ENCODE measurements at regions of chr12 and their contacts with region 1.

Region 1: DNA sequence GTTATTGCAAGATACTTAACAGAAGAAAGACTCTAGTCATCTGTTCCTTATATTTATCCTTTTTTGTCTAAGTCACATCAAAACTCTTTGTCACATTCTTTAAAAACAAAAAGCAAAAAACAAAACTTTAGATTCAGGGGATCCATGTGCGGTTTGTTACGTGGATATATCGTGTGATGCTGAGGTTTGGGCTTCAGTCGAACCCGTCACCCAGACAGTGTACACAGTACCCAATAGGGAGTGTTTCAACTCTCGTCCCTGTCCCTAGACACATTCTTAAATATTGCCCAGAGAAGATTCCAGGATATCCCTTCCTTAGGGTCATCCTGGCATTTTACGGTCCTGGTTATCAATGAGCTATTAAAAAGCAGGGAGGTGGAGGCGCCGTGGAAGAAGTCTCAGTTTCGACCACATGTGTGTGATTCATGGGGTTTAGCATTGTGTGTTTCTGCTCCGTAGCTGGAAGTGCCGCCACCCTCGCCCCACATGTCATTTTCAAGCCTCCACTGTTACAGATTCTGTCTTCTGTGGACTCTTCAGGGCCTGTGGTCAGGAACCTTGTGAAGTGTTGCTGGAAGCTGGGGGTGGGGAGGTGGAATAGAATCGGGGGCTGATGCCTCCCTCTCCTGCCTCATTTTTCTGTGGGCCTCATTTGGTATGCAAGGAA is 19.9 kb downstream of the CCND2 start:
- DNase-seq: peak; percentile 77
- H3K4me3 Mint-ChIP-seq: peak overlapping the region; percentile 59
- H3K27ac Mint-ChIP-seq: peak overlapping the region; percentile 92
- H3K4me1 Mint-ChIP-seq: peaks cover 81% of the 10 kb centered on the region
- H3K27me3 Mint-ChIP-seq: no peaks in the 10 kb centered on the region

Region 2: DNA sequence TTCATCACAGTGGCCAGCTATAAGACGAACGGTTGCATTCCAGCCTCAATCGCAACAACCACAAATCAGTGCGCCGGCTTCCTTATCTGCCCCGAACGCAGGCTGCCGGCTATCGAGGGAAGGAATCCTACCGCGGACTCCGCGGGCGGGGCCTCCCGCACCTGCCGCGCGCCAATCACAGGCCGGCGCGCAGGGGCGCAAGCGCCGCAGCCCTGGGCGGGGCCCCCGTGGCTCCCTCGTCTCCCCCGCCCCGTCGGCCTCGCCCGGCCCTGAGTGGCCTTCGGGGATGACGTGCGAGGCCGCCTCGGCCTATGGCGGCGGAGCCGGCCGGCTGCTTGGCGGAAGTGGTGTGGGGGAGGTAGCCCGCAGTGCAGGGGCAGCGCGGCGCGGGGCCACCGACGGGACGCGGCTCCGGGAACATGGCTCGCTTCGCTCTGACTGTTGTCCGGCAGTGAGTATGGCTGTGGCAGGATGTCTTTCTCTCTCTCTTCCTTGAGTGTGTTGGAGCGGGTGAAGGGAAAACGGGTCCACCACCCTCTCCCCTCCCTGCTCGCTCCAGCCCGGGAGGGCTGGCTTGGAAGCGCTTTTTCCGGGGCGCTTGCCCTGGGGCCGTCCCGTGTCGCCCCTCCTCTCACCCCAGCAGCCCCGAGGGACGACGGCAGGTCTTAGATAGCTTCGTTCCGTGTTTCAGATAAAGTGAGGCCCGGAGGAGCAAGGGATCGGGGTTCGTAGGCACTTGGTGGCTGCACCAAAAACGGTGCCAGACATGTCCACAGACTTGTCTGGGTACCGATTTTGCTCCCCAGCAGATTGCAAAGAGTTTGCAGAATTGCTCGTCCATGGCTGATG is 27.6 kb after region 1 on chr12 and contains the start of gene TIGAR:
- CTCF ChIA-PET with region 1: no interaction called
- POLR2A ChIA-PET with region 1: interaction called, 4 read pairs
- intact Hi-C with region 1: loop called (anchors 2 kb)
- DNase-seq: peak; percentile 94
- H3K4me3 Mint-ChIP-seq: peak within 1 kb of the TSS; percentile 94
- H3K27ac Mint-ChIP-seq: peak within 1 kb of the TSS; percentile 87
- H3K4me1 Mint-ChIP-seq: peaks cover 34% of the 10 kb centered on the region
- H3K27me3 Mint-ChIP-seq: no peaks in the 10 kb centered on the region
- total RNA-seq, gene TIGAR: 12.0 to 13.6 TPM

Measured in activated CD4-positive, alpha-beta memory T cell treated with anti-CD3 and anti-CD28 coated beads for 36 hours (primary cell).